ENCODE measurements at regions of chr17 and their contacts with region 1.

Region 1: GRCh38 chr17:50853015-50853615 is 13.0 kb downstream of the TOB1 start:
- DNase-seq: no peak
- H3K4me3 Mint-ChIP-seq: no peak overlapping the region
- H3K27ac Mint-ChIP-seq: peak overlapping the region; percentile 85
- H3K4me1 Mint-ChIP-seq: peaks cover 27% of the 10 kb centered on the region
- H3K27me3 Mint-ChIP-seq: peaks cover 20% of the 10 kb centered on the region

Region 2: GRCh38 chr17:50865984-50866774 is 13.1 kb after region 1 on chr17 and contains the start of gene TOB1:
- intact Hi-C with region 1: no loop called
- DNase-seq: peak; percentile 94
- H3K4me3 Mint-ChIP-seq: peak within 1 kb of the TSS; percentile 100
- H3K27ac Mint-ChIP-seq: peak within 1 kb of the TSS; percentile 99
- H3K4me1 Mint-ChIP-seq: peaks cover 60% of the 10 kb centered on the region
- H3K27me3 Mint-ChIP-seq: peaks cover 2% of the 10 kb centered on the region
- total RNA-seq, gene TOB1: 29.6 and 35.5 TPM in 2 replicates

Region 3: DNA sequence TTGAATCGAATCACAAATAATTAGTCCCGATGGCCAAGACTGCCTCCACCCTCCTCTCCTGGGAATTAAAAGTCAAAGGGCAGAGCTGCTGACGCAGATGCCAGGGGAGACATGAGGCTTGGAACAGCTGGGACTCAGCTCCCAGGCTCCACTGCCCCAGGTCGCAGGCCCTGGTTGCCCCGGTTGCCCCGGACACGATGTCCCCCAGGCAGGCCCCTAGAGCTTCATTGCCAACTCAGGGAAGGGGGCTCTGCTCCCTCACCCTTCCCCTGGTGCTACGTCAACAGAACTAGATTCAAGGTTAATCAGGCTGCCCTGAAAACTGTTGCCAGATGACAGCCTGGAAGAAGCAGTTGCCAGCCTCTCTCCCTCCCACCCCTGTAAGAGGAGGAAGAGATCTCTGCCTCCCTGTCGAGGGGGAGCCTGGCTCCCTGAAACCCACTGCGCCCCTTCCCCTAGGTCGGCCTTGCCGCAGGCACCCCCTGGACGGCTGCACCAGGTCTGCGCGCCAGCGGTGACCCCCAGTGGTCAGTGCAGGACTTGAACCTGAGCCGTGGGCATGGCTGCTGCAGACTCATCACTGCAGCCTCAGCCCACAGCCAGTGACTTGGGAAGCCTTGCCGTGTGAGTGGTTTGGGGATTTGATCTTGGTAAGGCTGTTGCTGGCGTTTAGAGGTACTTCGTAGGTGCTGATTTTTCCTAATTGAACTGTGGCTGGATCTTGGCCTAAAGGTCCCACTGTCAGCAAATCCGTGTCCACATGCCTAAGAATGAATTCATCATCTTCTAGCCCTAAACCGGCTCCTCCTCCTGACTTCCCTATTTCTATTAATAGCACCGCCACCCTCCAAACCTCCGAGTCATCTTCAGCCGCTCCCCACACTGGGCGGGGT is 97.1 kb after region 1 on chr17:
- intact Hi-C with region 1: loop called (anchors 1 kb)
- DNase-seq: peak; percentile 34
- H3K4me3 Mint-ChIP-seq: no peak overlapping the region
- H3K27ac Mint-ChIP-seq: no peak overlapping the region
- H3K4me1 Mint-ChIP-seq: peaks cover 9% of the 10 kb centered on the region
- H3K27me3 Mint-ChIP-seq: peaks cover 2% of the 10 kb centered on the region

Region 4: GRCh38 chr17:50956750-50957523 is 103.8 kb after region 1 on chr17:
- intact Hi-C with region 1: loop called (anchors 1 kb)
- DNase-seq: peak; percentile 51
- H3K4me3 Mint-ChIP-seq: no peak overlapping the region
- H3K27ac Mint-ChIP-seq: peak overlapping the region; percentile 48
- H3K4me1 Mint-ChIP-seq: peaks cover 5% of the 10 kb centered on the region
- H3K27me3 Mint-ChIP-seq: no peaks in the 10 kb centered on the region

Region 5: GRCh38 chr17:51050291-51051033 is 197.3 kb after region 1 on chr17:
- intact Hi-C with region 1: loop called (anchors 5 kb)
- DNase-seq: no peak
- H3K4me3 Mint-ChIP-seq: no peak overlapping the region
- H3K27ac Mint-ChIP-seq: peak overlapping the region; percentile 59
- H3K4me1 Mint-ChIP-seq: no peaks in the 10 kb centered on the region
- H3K27me3 Mint-ChIP-seq: peaks cover 2% of the 10 kb centered on the region

Measured in activated T-helper 1 cell treated with anti-CD3 and anti-CD28 coated beads, Interleukin-12 subunit alpha, Interleukin-12 subunit beta, Interleukin-2, Interleukin-4 antibody, amounts not matched to agents 30 ng/mL and 10 ng/mL and 1 ng/mL, durations not matched to agents 14 hours and 24 hours and 36 hours (primary cell).